Activated CD8-positive, alpha-beta T cell treated with anti-CD3 and anti-CD28 coated beads, Interleukin-2, amount 10 ng/mL, durations not matched to agents 7 days and 5 days (primary cell): ENCODE measurements at regions of chr15 and their contacts with region 1.

Region 1: DNA sequence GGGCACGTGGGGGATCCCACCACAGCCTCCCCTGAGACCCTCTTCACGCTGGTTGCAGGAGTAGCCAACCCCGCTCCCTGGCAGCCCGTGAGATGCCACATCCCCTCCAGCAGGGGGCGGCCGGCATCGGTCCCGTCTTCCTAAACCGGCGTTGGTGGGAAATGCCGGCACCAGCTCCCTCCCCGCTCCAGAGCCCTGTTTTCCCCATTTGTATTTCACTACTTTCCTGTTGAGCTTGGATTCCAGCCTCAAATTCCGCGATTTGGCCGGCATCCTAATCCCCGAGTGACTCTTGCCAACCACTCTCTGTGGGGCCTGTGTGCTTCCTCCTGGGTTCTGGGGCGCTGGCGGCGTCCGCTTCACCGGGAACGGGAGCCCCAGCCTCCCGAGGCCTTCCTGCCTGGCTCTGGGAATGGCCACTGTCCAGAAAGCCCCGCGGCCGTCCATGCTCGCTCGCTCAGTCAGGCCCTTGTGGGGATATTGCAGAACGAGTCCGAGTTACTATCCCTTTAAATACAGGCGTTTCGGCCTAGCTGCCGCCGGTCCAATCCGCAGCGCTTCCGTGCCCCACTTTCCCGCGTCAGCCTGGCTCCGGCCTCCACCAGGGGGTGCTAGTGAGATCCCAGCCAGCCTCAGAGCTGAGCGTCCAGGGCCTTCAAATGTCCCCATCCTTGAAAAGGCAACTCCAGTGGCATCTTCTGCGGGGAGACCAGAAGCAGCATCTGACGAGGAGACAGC is 8.1 kb upstream of the ADAMTS17 start:
- DNase-seq: peak; percentile 91
- ATAC-seq: peak; percentile 98
- H3K4me3 Mint-ChIP-seq: peak overlapping the region; percentile 83
- H3K27ac Mint-ChIP-seq: peak overlapping the region; percentile 88
- H3K4me1 Mint-ChIP-seq: peaks cover 9% of the 10 kb centered on the region
- H3K27me3 Mint-ChIP-seq: peaks cover 9% of the 10 kb centered on the region

Region 2: GRCh38 chr15:100053474-100054121 is 296.3 kb before region 1 on chr15:
- CTCF ChIA-PET with region 1: no interaction called
- POLR2A ChIA-PET with region 1: no interaction called
- DNase-seq: no peak
- ATAC-seq: no peak
- H3K4me3 Mint-ChIP-seq: no peak overlapping the region
- H3K27ac Mint-ChIP-seq: no peak overlapping the region
- H3K4me1 Mint-ChIP-seq: peaks cover 4% of the 10 kb centered on the region
- H3K27me3 Mint-ChIP-seq: no peaks in the 10 kb centered on the region

Region 3: DNA sequence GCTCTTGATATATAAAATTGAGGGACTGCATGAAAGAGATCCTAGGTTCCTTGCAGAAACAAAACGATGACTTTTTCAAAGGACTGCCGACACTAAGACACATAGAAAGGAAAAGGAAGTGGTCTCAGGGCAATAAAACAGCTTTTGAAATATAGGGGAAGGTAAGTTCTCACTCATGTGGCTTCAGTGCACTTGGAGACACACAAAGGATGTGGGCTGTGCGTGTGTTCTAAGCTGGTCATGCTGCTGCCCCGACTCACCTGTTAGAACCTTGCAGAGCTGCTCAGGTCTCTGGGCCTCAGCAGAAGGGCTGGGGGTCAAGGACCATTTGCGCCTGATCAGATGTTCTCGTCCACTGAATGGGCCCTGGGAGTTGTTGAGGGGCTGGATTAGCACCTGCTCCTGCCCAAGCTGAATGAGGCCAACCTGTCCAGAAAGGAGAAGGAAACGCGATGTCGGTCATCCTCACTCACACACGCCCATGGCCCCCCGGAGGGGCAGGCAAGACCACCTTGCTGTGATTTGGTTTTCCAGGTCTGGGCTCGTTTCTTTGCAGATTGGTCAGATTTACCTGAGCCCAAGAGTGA is 19.1 kb before region 1 on chr15:
- CTCF ChIA-PET with region 1: interaction called, 148 read pairs
- POLR2A ChIA-PET with region 1: no interaction called
- DNase-seq: peak; percentile 78
- ATAC-seq: peak; percentile 91
- H3K4me3 Mint-ChIP-seq: peak overlapping the region; percentile 63
- H3K27ac Mint-ChIP-seq: peak overlapping the region; percentile 92
- H3K4me1 Mint-ChIP-seq: peaks cover 73% of the 10 kb centered on the region
- H3K27me3 Mint-ChIP-seq: no peaks in the 10 kb centered on the region

Region 4: DNA sequence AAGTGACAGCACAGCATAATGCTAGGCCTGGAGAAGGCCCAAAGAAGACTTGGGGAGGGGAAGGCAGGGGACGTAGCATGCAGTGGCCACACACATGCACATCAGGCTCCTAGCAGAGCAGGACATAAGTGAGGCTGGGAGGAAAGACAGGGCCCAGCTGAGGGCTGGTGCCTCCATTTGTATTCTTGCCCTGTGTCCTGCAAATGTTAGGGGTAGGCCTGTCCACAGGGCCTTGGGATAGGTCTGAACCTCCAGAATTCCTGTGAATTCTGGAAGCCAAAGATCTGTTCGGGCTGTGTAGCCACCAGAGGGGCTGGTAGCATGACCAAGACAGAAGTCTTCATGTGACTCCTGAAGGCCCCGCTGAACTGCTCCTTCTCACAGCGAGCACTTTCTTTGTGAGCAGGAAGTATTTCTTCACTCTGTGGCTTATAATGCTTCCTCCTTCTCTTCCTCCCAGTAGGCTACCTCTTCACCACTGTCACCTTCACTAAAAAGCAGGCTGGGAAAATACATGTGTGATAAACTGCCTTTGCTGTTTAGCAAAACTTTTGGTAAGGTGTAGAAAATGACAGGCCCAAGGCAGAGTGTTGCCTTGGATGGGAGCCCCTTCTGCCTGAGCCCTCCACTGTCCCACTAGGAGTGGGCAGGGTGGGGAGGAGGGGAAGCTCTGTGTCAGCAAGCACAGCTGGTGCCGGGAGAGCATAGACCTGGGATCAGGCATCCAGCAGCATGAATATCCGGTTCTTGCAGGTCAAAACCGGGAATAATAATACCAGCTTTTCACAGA is 170.5 kb after region 1 on chr15:
- CTCF ChIA-PET with region 1: interaction called, 10 read pairs
- POLR2A ChIA-PET with region 1: no interaction called
- DNase-seq: no peak
- ATAC-seq: peak; percentile 82
- H3K4me3 Mint-ChIP-seq: peak overlapping the region; percentile 49
- H3K27ac Mint-ChIP-seq: peak overlapping the region; percentile 90
- H3K4me1 Mint-ChIP-seq: peaks cover 21% of the 10 kb centered on the region
- H3K27me3 Mint-ChIP-seq: no peaks in the 10 kb centered on the region

Region 5: GRCh38 chr15:100572362-100572983 is 222.6 kb after region 1 on chr15:
- CTCF ChIA-PET with region 1: interaction called, 106 read pairs
- POLR2A ChIA-PET with region 1: no interaction called
- DNase-seq: no peak
- ATAC-seq: no peak
- H3K4me3 Mint-ChIP-seq: peak overlapping the region; percentile 53
- H3K27ac Mint-ChIP-seq: peak overlapping the region; percentile 82
- H3K4me1 Mint-ChIP-seq: peaks cover 39% of the 10 kb centered on the region
- H3K27me3 Mint-ChIP-seq: no peaks in the 10 kb centered on the region

Region 6: GRCh38 chr15:100602064-100602822 is 252.4 kb after region 1 on chr15 and contains the starts of genes ASB7 and LINS1:
- CTCF ChIA-PET with region 1: interaction called, 54 read pairs
- POLR2A ChIA-PET with region 1: interaction called, 14 read pairs
- DNase-seq: peak; percentile 100
- ATAC-seq: peak; percentile 85
- H3K4me3 Mint-ChIP-seq: no peak within 1 kb of the TSS
- H3K27ac Mint-ChIP-seq: peak within 1 kb of the TSS; percentile 95
- H3K4me1 Mint-ChIP-seq: peaks cover 54% of the 10 kb centered on the region
- H3K27me3 Mint-ChIP-seq: no peaks in the 10 kb centered on the region
- total RNA-seq, gene ASB7: 17.7 to 18.5 TPM
- total RNA-seq, gene LINS1: 40.9 to 45.3 TPM

Region 7: GRCh38 chr15:100627789-100628395 is 278.0 kb after region 1 on chr15:
- CTCF ChIA-PET with region 1: interaction called, 10 read pairs
- POLR2A ChIA-PET with region 1: no interaction called
- DNase-seq: peak; percentile 76
- ATAC-seq: peak; percentile 85
- H3K4me3 Mint-ChIP-seq: no peak overlapping the region
- H3K27ac Mint-ChIP-seq: no peak overlapping the region
- H3K4me1 Mint-ChIP-seq: peaks cover 5% of the 10 kb centered on the region
- H3K27me3 Mint-ChIP-seq: no peaks in the 10 kb centered on the region

Region 8: GRCh38 chr15:101008158-101009139 is 658.6 kb after region 1 on chr15:
- CTCF ChIA-PET with region 1: interaction called, 19 read pairs
- POLR2A ChIA-PET with region 1: no interaction called
- DNase-seq: peak; percentile 90
- ATAC-seq: peak; percentile 94
- H3K4me3 Mint-ChIP-seq: peak overlapping the region; percentile 86
- H3K27ac Mint-ChIP-seq: no peak overlapping the region
- H3K4me1 Mint-ChIP-seq: peaks cover 19% of the 10 kb centered on the region
- H3K27me3 Mint-ChIP-seq: peaks cover 21% of the 10 kb centered on the region